ENCODE measurements at regions of chr1 and their contacts with region 1.

Region 1: GRCh38 chr1:101178688-101179491 is 57.9 kb upstream of the S1PR1 start:
- DNase-seq: peak; percentile 29
- H3K4me3 Mint-ChIP-seq: peak overlapping the region; percentile 81
- H3K27ac Mint-ChIP-seq: peak overlapping the region; percentile 100
- H3K4me1 Mint-ChIP-seq: peaks cover 71% of the 10 kb centered on the region
- H3K27me3 Mint-ChIP-seq: no peaks in the 10 kb centered on the region

Region 2: GRCh38 chr1:100928128-100928527 is 250.8 kb before region 1 on chr1:
- intact Hi-C with region 1: loop called (anchors 5 kb)
- DNase-seq: no peak
- H3K4me3 Mint-ChIP-seq: no peak overlapping the region
- H3K27ac Mint-ChIP-seq: no peak overlapping the region
- H3K4me1 Mint-ChIP-seq: peaks cover 49% of the 10 kb centered on the region
- H3K27me3 Mint-ChIP-seq: no peaks in the 10 kb centered on the region

Region 3: GRCh38 chr1:101025657-101026504 is 153.0 kb before region 1 on chr1 and contains the start of gene DPH5:
- intact Hi-C with region 1: loop called (anchors 2 kb)
- DNase-seq: peak; percentile 85
- H3K4me3 Mint-ChIP-seq: peak within 1 kb of the TSS; percentile 99
- H3K27ac Mint-ChIP-seq: peak within 1 kb of the TSS; percentile 94
- H3K4me1 Mint-ChIP-seq: peaks cover 51% of the 10 kb centered on the region
- H3K27me3 Mint-ChIP-seq: no peaks in the 10 kb centered on the region
- total RNA-seq, gene DPH5: 33.5 and 40.0 TPM in 2 replicates

Region 4: GRCh38 chr1:101122452-101123166 is 56.3 kb before region 1 on chr1:
- intact Hi-C with region 1: loop called (anchors 1 kb)
- DNase-seq: no peak
- H3K4me3 Mint-ChIP-seq: no peak overlapping the region
- H3K27ac Mint-ChIP-seq: peak overlapping the region; percentile 73
- H3K4me1 Mint-ChIP-seq: peaks cover 60% of the 10 kb centered on the region
- H3K27me3 Mint-ChIP-seq: no peaks in the 10 kb centered on the region

Region 5: DNA sequence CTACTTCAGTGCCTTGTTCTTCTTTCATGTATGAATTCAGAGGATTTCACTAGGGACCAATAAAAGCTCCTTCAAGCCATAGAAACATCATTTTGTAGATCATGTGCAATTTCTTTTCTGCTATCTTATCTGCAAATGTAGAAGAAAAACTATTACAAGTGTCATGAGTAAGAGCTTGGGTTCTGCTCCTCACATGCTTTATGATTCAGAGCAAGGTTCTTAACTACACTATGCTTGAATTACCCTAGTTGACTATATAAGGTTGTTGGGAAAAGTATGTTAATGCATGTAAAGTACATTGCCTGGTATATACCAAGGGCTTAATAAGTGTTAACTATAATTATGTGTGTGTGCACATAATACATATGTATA is 33.5 kb before region 1 on chr1:
- intact Hi-C with region 1: loop called (anchors 2 kb)
- DNase-seq: no peak
- H3K4me3 Mint-ChIP-seq: no peak overlapping the region
- H3K27ac Mint-ChIP-seq: peak overlapping the region; percentile 74
- H3K4me1 Mint-ChIP-seq: peaks cover 24% of the 10 kb centered on the region
- H3K27me3 Mint-ChIP-seq: no peaks in the 10 kb centered on the region

Region 6: DNA sequence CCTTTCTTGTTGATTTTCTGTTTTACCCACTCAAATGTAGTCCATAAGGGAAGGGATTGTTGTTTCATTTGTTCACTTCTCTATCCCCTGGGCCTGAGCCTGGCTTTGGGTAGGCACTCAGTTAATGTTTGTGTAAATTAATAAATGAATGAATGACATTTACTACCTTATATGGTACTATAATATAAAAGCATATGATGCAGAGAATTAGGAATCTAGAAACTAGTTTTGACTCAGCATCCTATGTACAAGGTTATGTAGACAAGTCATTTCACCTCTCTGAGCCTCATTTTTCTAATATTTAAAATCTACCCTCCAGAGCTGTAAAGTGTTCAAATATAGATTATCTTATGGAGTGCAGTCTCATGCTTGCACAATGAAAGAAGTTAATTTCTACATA is 11.0 kb before region 1 on chr1:
- intact Hi-C with region 1: loop called (anchors 1 kb)
- DNase-seq: no peak
- H3K4me3 Mint-ChIP-seq: no peak overlapping the region
- H3K27ac Mint-ChIP-seq: peak overlapping the region; percentile 28
- H3K4me1 Mint-ChIP-seq: peaks cover 38% of the 10 kb centered on the region
- H3K27me3 Mint-ChIP-seq: no peaks in the 10 kb centered on the region

Region 7: DNA sequence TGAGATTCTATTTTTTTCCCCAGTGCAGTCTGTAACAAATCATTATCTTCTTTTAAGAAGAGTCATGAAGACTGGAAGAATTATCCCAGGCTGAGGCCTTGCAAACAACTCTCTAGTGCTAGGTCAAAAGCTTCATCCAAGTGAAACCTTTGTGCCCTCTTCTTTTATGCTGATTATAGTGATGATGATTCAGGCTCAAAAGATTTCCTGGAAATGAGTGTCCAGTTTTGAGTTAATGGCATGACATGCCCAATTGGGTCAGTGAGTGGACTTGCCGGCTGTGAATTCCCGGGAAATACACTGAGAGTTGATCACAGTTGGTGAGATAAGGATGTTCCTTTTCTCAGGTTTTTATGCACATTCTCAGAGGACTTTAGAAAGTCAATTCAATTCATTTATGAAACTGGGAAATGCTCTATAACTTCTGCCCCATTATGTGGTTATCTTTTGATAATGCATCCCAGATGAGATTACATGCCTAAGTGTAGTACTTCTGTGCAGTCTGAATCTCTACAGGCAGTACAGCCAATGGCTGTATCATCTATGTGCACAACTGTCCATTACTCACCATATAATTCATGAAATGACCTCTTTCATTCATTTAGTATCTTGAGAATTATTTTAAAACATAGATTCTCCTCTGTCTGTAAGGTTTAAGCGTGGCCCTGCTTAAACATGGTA is 124.1 kb after region 1 on chr1:
- intact Hi-C with region 1: no loop called
- DNase-seq: no peak
- H3K4me3 Mint-ChIP-seq: no peak overlapping the region
- H3K27ac Mint-ChIP-seq: no peak overlapping the region
- H3K4me1 Mint-ChIP-seq: peaks cover 8% of the 10 kb centered on the region
- H3K27me3 Mint-ChIP-seq: peaks cover 36% of the 10 kb centered on the region

Measured in activated T-helper 2 cell treated with anti-CD3 and anti-CD28 coated beads, Interferon-gamma antibody, Interleukin-2, Interleukin-4, amounts not matched to agents 10 μg/mL and 5 μg/mL and 100 μg/mL, durations not matched to agents 14 hours and 24 hours and 36 hours (primary cell).